Gastrocnemius medialis (tissue), 4 donors: ENCODE measurements at regions of chr16 and their contacts with region 1.

Region 1: GRCh38 chr16:8173111-8173644 is 417.1 kb downstream of the TMEM114 start:
- DNase-seq: peak; percentile 4 to 25
- ATAC-seq: peak in 1 of 2 donors; percentile 68
- H3K4me3 ChIP-seq: no peak overlapping the region
- H3K27ac ChIP-seq: no peak overlapping the region
- H3K4me1 ChIP-seq: no peaks in the 10 kb centered on the region
- H3K27me3 ChIP-seq: no peaks in the 10 kb centered on the region
- CTCF ChIP-seq: peak; percentile 21 to 57 (median 43)
- POLR2A ChIP-seq: no peak

Region 2: GRCh38 chr16:8063159-8063558 is 110.0 kb before region 1 on chr16:
- in situ Hi-C with region 1: loop called in 1 of 4 experiments (anchors 25 kb)
- intact Hi-C with region 1: no loop called
- DNase-seq: no peak
- ATAC-seq: no peak
- H3K4me3 ChIP-seq: no peak overlapping the region
- H3K27ac ChIP-seq: no peak overlapping the region
- H3K4me1 ChIP-seq: no peaks in the 10 kb centered on the region
- H3K27me3 ChIP-seq: no peaks in the 10 kb centered on the region
- CTCF ChIP-seq: no peak
- POLR2A ChIP-seq: no peak

Region 3: GRCh38 chr16:8087597-8088289 is 85.4 kb before region 1 on chr16:
- in situ Hi-C with region 1: no loop called
- intact Hi-C with region 1: no loop called
- DNase-seq: peak in 1 of 2 donors; percentile 2
- ATAC-seq: peak; percentile 36 to 54
- H3K4me3 ChIP-seq: no peak overlapping the region
- H3K27ac ChIP-seq: peak overlapping the region in 2 of 4 donors; percentile 28 to 39
- H3K4me1 ChIP-seq: no peaks in the 10 kb centered on the region
- H3K27me3 ChIP-seq: no peaks in the 10 kb centered on the region
- CTCF ChIP-seq: no peak
- POLR2A ChIP-seq: no peak